Posterior cingulate gyrus (tissue), 11 donors: ENCODE measurements at regions of chr3 and their contacts with region 1.

Region 1: DNA sequence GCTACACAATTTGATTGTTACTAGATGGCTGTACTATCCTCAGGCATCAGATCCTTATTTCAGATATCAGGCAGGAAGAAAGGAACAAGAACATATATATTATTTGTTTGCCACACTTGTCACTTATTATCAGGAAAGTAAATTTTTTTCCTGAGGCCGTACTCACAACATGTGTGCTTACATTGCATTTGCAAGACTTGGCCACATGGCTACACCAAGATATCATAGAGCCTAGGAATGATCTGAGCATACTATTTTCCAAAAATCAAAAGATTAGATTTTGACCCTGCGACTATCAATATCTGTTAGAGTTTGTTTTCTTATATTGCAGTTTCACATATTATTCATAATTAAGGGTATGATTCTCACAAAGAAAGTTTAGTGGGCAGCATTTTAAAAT is 426.2 kb upstream of the BCHE start:
- DNase-seq: no peak

Region 2: DNA sequence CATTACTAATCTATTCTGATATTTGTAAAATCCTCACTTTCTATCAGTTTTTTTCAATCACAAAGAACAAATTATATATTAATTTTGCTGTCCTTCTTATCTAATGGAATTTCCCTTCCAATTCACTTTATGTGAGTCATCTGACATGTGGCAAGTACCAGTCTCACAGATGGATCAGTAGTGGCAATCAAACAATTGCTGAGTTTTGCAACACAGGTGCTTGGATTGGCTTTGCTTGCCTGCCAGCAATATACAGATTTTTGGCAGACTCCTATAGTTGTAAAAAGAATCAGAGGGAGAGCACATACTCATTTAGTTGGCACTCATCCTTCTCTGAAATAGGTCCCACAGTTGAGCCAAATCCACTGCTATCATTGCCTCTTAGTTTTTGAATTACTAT is 509.9 kb before region 1 on chr3:
- intact Hi-C with region 1: no loop called
- DNase-seq: no peak

Region 3: DNA sequence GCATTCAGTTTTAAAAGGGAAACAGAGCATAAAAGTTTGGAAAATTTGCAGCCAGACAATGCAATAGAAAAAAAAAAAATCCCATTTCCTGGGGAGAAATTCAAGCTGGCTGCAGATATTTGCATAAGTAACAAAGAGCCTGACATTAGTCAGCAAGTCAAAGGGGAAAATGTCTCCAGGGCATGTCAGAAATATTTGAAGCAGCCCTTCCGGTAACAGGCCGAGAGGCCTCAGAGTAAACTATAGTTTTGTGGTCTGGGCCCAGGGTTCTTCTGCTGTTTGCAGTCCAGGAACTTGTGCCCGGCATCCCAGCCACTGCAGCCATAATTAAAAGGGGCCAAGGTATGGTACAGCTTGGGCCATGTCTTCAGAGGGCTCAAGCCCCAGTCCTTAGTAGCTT is 14.7 kb before region 1 on chr3:
- intact Hi-C with region 1: loop called (anchors 1 kb)
- DNase-seq: no peak

Region 4: DNA sequence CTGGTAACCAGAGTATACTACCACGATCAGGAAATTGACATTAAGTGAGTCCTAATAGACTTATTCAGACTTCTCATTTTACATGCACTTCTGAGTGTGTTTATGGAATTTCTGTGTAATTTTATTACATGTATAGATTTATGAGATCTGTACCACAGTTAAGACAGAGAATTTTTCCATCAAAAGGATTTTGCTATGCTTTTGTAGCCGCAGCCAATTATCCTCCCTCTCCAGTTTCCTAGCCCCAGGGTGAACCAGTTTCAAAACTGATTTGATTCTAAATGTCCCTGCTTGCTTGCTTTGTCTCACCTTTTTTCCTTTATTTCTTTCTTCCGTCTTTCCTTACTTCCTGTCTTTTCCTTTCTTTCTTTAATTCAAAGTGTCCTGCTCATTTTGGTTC is 235.0 kb after region 1 on chr3:
- intact Hi-C with region 1: no loop called
- DNase-seq: no peak